ENCODE measurements at regions of chr15 and their contacts with region 1.

Region 1: DNA sequence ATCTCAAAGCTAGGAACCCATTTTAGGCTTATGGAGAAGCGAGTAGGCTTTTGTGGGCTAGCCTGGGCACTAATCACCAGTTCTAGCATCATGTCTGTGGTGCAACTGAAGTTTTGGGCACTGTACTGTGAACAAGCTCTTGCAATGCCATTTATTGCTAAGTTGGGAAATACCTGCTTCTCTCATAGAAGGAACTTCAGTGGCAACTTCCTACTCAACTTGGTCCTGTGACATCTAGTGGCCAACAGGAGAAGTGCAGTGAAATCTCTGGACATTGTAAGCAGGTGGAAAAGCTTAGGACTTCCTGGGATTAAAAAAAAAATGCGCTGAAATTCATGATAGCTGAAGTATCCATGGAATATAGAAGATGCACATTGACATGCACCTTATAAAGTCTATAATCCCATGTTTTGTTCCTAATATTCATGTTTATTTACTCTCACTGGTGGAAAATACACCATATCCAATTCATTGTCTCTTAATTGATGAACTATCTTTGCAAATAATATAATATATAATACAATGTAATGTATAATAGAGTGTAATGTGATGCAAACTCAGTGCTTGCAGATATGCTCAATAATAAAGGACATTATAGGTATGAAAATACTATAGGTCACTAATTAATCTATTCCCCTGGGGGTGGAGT is 6.5 kb upstream of the ALDH1A3 start:
- DNase-seq: peak; percentile 82
- H3K4me3 ChIP-seq: no peak overlapping the region
- H3K27ac ChIP-seq: no peak overlapping the region
- H3K4me1 ChIP-seq: no peaks in the 10 kb centered on the region
- H3K27me3 ChIP-seq: peaks cover 4% of the 10 kb centered on the region
- CTCF ChIP-seq: peak; percentile 87

Region 2: DNA sequence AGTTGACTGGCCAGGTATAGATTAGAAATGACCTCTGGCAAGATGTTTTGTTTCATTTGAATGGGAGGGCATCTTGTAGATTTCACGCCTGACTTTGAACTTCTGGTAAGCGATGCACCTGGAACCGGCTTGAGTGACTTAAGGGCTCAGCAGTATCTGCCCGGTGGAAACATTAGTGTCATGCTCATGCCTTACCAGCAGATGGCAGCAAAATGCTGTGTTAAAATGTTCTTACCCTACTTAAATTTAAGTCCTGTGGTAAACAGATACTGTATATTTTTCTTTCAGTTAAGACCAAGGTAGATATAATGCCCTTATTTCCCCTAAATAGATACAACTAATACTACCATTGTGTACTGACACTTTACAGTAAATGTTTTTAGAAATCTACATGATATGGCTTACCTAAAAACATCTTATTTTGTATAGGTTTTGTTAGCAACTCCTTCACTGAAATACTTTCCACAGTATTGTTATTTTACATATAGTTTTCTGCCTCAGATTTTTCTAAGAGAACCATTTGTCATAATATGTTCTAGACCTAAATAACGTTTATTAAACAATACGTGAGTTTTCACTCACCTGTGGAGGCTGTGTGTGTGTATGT is 245.3 kb before region 1 on chr15:
- CTCF ChIA-PET with region 1: interaction called, 7 read pairs
- POLR2A ChIA-PET with region 1: no interaction called
- intact Hi-C with region 1: loop called (anchors 1 kb)
- DNase-seq: peak; percentile 69
- H3K4me3 ChIP-seq: no peak overlapping the region
- H3K27ac ChIP-seq: no peak overlapping the region
- H3K4me1 ChIP-seq: no peaks in the 10 kb centered on the region
- H3K27me3 ChIP-seq: no peaks in the 10 kb centered on the region
- CTCF ChIP-seq: peak; percentile 81

Region 3: GRCh38 chr15:100671858-100672543 is 201.2 kb before region 1 on chr15:
- CTCF ChIA-PET with region 1: interaction called, 4 read pairs
- POLR2A ChIA-PET with region 1: no interaction called
- intact Hi-C with region 1: loop called (anchors 2 kb)
- DNase-seq: peak; percentile 55
- H3K4me3 ChIP-seq: no peak overlapping the region
- H3K27ac ChIP-seq: no peak overlapping the region
- H3K4me1 ChIP-seq: no peaks in the 10 kb centered on the region
- H3K27me3 ChIP-seq: no peaks in the 10 kb centered on the region
- CTCF ChIP-seq: peak; percentile 69

Region 4: DNA sequence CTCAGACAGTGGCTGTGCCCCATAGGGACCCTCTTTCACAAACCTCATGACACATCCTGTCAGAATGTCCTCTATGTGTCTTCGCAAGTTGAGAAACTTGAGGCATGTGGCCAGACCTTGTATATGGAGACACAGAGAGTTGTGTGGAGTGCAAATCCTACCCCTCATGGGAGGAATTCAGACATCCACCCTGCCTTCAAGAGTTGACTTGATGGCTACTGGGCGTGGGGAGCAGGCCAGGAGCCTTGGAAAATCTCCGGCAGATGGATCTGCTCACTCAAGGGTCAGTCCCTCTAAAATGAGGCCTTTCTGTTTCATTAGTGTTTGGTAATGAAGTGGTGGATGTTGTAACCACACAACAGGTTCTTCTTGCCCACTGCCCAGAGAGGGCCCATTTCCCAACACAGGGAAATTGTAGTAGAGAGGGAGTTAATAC is 191.8 kb before region 1 on chr15:
- CTCF ChIA-PET with region 1: interaction called, 14 read pairs
- POLR2A ChIA-PET with region 1: no interaction called
- intact Hi-C with region 1: no loop called
- DNase-seq: no peak
- H3K4me3 ChIP-seq: no peak overlapping the region
- H3K27ac ChIP-seq: no peak overlapping the region
- H3K4me1 ChIP-seq: no peaks in the 10 kb centered on the region
- H3K27me3 ChIP-seq: no peaks in the 10 kb centered on the region
- CTCF ChIP-seq: no peak

Measured in A673 (cell line).